Naive thymus-derived CD4-positive, alpha-beta T cell (primary cell): ENCODE measurements at regions of chr1 and their contacts with region 1.

Region 1: GRCh38 chr1:6026095-6026809 is 19.4 kb upstream of the KCNAB2 start:
- DNase-seq: peak; percentile 82 to 92 (median 89)
- ATAC-seq: peak; percentile 92
- H3K4me3 ChIP-seq: peak overlapping the region; percentile 89
- H3K4me3 Mint-ChIP-seq: peak overlapping the region; percentile 88 to 99 (median 95)
- H3K27ac ChIP-seq: peak overlapping the region; percentile 84
- H3K27ac Mint-ChIP-seq: peak overlapping the region; percentile 87 to 98 (median 96)
- H3K4me1 ChIP-seq: peaks cover 42 to 49% of the 10 kb centered on the region in 2 donors
- H3K4me1 Mint-ChIP-seq: peaks cover 45 to 56% (median 51%) of the 10 kb centered on the region in 7 donors
- H3K27me3 ChIP-seq: no peaks in the 10 kb centered on the region
- H3K27me3 Mint-ChIP-seq: no peaks in the 10 kb centered on the region

Region 2: DNA sequence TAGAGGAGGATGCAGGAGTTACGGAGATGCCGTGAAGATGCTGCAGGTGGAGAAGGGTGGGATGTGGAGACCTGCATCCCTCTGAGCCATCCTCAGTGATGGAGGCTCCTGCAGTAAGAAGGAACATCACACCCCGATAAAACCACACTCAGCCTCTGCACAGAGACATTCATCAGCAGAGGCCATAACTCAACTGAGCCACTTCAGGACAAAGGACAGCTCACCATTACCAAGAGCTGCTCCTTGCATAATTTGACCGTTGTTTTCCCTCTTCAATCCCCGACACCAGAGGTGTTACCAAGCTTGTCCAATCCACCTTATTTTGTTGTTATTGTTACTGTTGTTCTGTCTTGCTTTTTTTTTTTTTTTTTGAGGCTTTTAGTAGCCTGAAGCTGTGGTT is 827.9 kb before region 1 on chr1:
- CTCF ChIA-PET with region 1: no interaction called
- POLR2A ChIA-PET with region 1: no interaction called
- intact Hi-C with region 1: no loop called
- DNase-seq: no peak
- ATAC-seq: no peak
- H3K4me3 ChIP-seq: no peak overlapping the region
- H3K4me3 Mint-ChIP-seq: no peak overlapping the region
- H3K27ac ChIP-seq: no peak overlapping the region
- H3K27ac Mint-ChIP-seq: no peak overlapping the region
- H3K4me1 ChIP-seq: no peaks in the 10 kb centered on the region
- H3K4me1 Mint-ChIP-seq: peaks cover 0 to 3% (median 0%) of the 10 kb centered on the region in 7 donors
- H3K27me3 ChIP-seq: no peaks in the 10 kb centered on the region
- H3K27me3 Mint-ChIP-seq: peaks cover 0 to 5% (median 0%) of the 10 kb centered on the region in 5 donors

Region 3: GRCh38 chr1:5975133-5975880 is 50.9 kb before region 1 on chr1:
- CTCF ChIA-PET with region 1: no interaction called
- POLR2A ChIA-PET with region 1: interaction called, 8 read pairs
- intact Hi-C with region 1: loop called in 1 of 2 experiments (anchors 10 kb)
- DNase-seq: peak in 6 of 9 donors; percentile 27 to 44 (median 39)
- ATAC-seq: peak; percentile 86
- H3K4me3 ChIP-seq: no peak overlapping the region
- H3K4me3 Mint-ChIP-seq: peak overlapping the region in 6 of 10 donors; percentile 18 to 73 (median 55)
- H3K27ac ChIP-seq: no peak overlapping the region
- H3K27ac Mint-ChIP-seq: peak overlapping the region in 4 of 9 donors; percentile 33 to 83 (median 46)
- H3K4me1 ChIP-seq: peaks cover 0 to 5% of the 10 kb centered on the region in 2 donors
- H3K4me1 Mint-ChIP-seq: peaks cover 0 to 38% (median 16%) of the 10 kb centered on the region in 7 donors
- H3K27me3 ChIP-seq: no peaks in the 10 kb centered on the region
- H3K27me3 Mint-ChIP-seq: no peaks in the 10 kb centered on the region

Region 4: GRCh38 chr1:5992026-5992813 is 34.0 kb before region 1 on chr1 and contains the start of gene NPHP4:
- CTCF ChIA-PET with region 1: interaction called, 8 read pairs
- POLR2A ChIA-PET with region 1: interaction called, 67 read pairs
- intact Hi-C with region 1: loop called (anchors 1 kb)
- DNase-seq: peak; percentile 95 to 99 (median 99)
- ATAC-seq: peak; percentile 93
- H3K4me3 ChIP-seq: peak within 1 kb of the TSS; percentile 88
- H3K4me3 Mint-ChIP-seq: peak within 1 kb of the TSS; percentile 88 to 100 (median 96)
- H3K27ac ChIP-seq: peak within 1 kb of the TSS; percentile 94
- H3K27ac Mint-ChIP-seq: peak within 1 kb of the TSS; percentile 88 to 97 (median 96)
- H3K4me1 ChIP-seq: peaks cover 23 to 32% of the 10 kb centered on the region in 2 donors
- H3K4me1 Mint-ChIP-seq: peaks cover 23 to 49% (median 40%) of the 10 kb centered on the region in 7 donors
- H3K27me3 ChIP-seq: no peaks in the 10 kb centered on the region
- H3K27me3 Mint-ChIP-seq: peaks cover 0 to 2% (median 0%) of the 10 kb centered on the region in 5 donors
- total RNA-seq, gene NPHP4: 9.0 to 20.6 (median 11.1) TPM

Region 5: DNA sequence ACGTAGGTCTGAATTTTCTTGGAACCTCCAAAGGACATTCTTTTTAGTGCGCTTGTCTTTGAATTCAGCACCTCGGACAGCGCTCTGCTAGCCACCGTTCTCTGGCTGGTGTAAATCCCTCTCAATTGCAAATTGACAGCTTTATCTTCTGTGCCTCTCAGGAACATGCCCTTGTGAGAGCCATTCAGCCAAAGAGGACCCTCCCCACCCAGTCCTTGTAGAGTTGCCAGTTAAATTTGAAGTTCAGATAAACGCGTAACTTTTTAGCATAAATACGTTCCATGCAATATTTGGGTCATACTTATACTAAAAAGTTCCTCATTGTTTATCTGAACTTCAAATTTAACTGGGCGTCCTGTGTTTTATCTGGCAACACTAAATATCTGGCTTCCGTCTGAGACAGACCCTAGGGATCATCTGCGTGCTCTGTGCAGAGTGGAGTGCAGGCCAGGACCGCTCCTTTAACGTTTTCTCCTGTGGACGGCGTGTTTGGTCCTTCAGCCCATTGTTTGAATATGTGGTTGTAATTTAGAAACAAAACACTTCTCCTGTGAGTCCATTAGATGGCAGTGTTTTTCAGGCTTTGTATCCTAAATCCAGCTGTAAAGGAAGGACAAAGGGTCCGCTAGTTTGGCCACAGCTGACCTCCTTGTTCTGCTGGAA is 26.4 kb after region 1 on chr1:
- CTCF ChIA-PET with region 1: no interaction called
- POLR2A ChIA-PET with region 1: interaction called, 3 read pairs
- intact Hi-C with region 1: loop called in 1 of 2 experiments (anchors 1 kb)
- DNase-seq: peak in 8 of 9 donors; percentile 17 to 52 (median 44)
- ATAC-seq: no peak
- H3K4me3 ChIP-seq: no peak overlapping the region
- H3K4me3 Mint-ChIP-seq: no peak overlapping the region
- H3K27ac ChIP-seq: no peak overlapping the region
- H3K27ac Mint-ChIP-seq: peak overlapping the region in 1 of 9 donors; percentile 89
- H3K4me1 ChIP-seq: no peaks in the 10 kb centered on the region
- H3K4me1 Mint-ChIP-seq: peaks cover 14 to 33% (median 24%) of the 10 kb centered on the region in 7 donors
- H3K27me3 ChIP-seq: no peaks in the 10 kb centered on the region
- H3K27me3 Mint-ChIP-seq: no peaks in the 10 kb centered on the region